Activated B cell treated with CpG ODN at 0.5 μM for 24 hours (primary cell): ENCODE measurements at regions of chr16 and their contacts with region 1.

Region 1: GRCh38 chr16:16850243-16850642 is 471.3 kb downstream of the NPIPA7 start:
- DNase-seq: no peak
- ATAC-seq: no peak
- H3K4me3 Mint-ChIP-seq: no peak overlapping the region
- H3K27ac Mint-ChIP-seq: no peak overlapping the region
- H3K4me1 Mint-ChIP-seq: no peaks in the 10 kb centered on the region
- H3K27me3 Mint-ChIP-seq: peaks cover 11% of the 10 kb centered on the region
- CTCF ChIP-seq: no peak

Region 2: GRCh38 chr16:17258848-17259713 is 408.8 kb after region 1 on chr16:
- CTCF ChIA-PET with region 1: no interaction called
- POLR2A ChIA-PET with region 1: interaction called, 10 read pairs
- intact Hi-C with region 1: no loop called
- DNase-seq: no peak
- ATAC-seq: peak; percentile 83
- H3K4me3 Mint-ChIP-seq: peak overlapping the region; percentile 79
- H3K27ac Mint-ChIP-seq: peak overlapping the region; percentile 91
- H3K4me1 Mint-ChIP-seq: peaks cover 38% of the 10 kb centered on the region
- H3K27me3 Mint-ChIP-seq: no peaks in the 10 kb centered on the region
- CTCF ChIP-seq: no peak